Endothelial cell of umbilical vein (primary cell): ENCODE measurements at regions of chr3 and their contacts with region 1.

Region 1: GRCh38 chr3:195226900-195227447 is 44.0 kb downstream of the XXYLT1 start:
- DNase-seq: peak; percentile 46
- H3K4me3 ChIP-seq: no peak overlapping the region
- H3K27ac ChIP-seq: no peak overlapping the region
- H3K4me1 ChIP-seq: peaks cover 28% of the 10 kb centered on the region
- H3K27me3 ChIP-seq: no peaks in the 10 kb centered on the region
- CTCF ChIP-seq: peak; percentile 44 to 63
- POLR2A ChIP-seq: no peak

Region 2: DNA sequence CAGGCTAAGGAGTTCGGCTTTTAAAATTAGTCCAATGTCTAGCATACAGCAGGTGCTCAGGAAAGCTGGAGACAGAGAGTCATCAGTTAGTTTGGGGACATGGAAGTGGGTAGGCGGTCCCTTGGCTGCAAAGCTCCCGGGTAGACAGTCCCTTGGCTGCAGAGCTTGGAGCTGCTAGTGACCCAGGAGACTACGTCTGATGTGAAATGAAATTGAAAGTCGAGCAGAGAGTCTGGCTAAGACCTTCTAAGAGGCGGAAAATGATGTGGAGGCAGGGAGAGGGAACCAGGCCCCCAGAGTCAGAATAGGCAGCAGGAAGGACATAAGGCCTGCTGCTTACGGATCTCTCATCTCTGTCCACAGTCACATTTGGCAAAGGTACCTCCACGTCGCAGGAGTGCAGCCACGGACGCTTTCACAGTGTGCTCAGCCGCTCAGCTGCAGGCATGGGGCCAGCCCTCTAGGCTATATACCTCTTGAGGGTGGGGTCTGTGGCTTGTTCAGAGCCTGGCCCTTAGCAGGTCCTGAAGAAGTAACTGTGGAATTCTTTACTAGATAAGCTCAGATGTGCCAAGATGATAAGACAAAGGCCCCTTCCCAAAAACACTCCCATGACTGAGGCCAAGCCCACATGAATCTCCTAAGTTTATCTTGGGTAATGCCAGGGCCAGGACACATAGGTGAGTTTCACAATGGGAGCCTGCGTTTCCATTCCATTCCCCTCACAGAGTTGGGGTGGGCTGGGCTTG is 87.7 kb before region 1 on chr3:
- CTCF ChIA-PET with region 1: no interaction called
- POLR2A ChIA-PET with region 1: no interaction called
- dilution Hi-C with region 1: no loop called
- intact Hi-C with region 1: no loop called
- DNase-seq: no peak
- H3K4me3 ChIP-seq: no peak overlapping the region
- H3K27ac ChIP-seq: no peak overlapping the region
- H3K4me1 ChIP-seq: peaks cover 27% of the 10 kb centered on the region
- H3K27me3 ChIP-seq: no peaks in the 10 kb centered on the region
- CTCF ChIP-seq: no peak
- POLR2A ChIP-seq: no peak

Region 3: DNA sequence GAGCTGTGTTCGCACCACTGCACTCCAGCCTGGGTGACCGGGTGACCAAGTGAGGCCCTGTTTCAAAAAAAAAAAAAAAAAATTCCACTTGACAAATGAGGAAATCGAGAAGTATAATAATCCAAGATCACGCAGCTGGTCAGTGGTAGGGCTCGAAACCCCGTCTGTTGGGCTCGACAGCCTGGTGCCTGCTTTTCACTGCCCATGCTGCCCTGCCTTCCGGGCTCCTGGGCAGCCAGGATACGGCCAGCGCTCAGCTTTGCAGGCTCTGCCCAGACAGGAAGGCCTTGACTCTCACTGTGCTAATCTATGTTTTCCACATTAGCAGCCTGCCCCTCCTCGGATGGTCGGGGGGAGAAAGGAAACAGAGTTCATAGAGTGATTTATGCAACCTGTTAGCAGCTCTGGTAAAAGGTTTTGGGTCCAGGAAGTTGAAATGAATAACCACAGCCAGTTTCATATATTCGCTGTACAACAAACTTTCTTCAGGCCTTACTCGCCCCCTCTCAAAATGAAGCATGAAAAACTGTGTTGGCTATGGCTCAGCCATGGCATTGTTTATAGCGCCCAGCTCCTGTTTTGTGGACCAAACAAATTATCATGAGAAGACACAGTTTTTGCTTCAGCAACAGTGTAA is 64.8 kb before region 1 on chr3:
- CTCF ChIA-PET with region 1: interaction called, 9 read pairs
- POLR2A ChIA-PET with region 1: interaction called, 3 read pairs
- dilution Hi-C with region 1: no loop called
- intact Hi-C with region 1: loop called (anchors 1 kb)
- DNase-seq: peak; percentile 99
- H3K4me3 ChIP-seq: no peak overlapping the region
- H3K27ac ChIP-seq: peak overlapping the region; percentile 95
- H3K4me1 ChIP-seq: peaks cover 85% of the 10 kb centered on the region
- H3K27me3 ChIP-seq: no peaks in the 10 kb centered on the region
- CTCF ChIP-seq: no peak
- POLR2A ChIP-seq: peak; percentile 89

Region 4: DNA sequence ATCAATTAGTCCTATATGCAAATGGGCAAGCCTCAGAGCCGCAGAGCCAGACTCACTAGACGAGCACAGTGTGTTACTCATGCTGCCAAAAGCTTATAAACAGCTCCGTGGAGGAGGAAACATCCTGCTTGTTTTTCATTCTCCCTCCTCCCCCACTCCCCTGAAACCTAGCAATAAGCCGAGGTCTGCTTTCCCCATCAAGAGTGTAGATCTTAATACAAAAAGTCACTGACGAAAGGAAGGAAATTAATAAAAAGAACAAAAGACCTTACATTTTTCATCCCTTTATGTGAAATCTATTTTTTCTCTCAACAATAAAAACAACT is 44.5 kb before region 1 on chr3:
- CTCF ChIA-PET with region 1: interaction called, 11 read pairs
- POLR2A ChIA-PET with region 1: no interaction called
- dilution Hi-C with region 1: no loop called
- intact Hi-C with region 1: loop called (anchors 1 kb)
- DNase-seq: peak; percentile 96
- H3K4me3 ChIP-seq: no peak overlapping the region
- H3K27ac ChIP-seq: peak overlapping the region; percentile 93
- H3K4me1 ChIP-seq: peaks cover 65% of the 10 kb centered on the region
- H3K27me3 ChIP-seq: no peaks in the 10 kb centered on the region
- CTCF ChIP-seq: no peak
- POLR2A ChIP-seq: no peak

Region 5: DNA sequence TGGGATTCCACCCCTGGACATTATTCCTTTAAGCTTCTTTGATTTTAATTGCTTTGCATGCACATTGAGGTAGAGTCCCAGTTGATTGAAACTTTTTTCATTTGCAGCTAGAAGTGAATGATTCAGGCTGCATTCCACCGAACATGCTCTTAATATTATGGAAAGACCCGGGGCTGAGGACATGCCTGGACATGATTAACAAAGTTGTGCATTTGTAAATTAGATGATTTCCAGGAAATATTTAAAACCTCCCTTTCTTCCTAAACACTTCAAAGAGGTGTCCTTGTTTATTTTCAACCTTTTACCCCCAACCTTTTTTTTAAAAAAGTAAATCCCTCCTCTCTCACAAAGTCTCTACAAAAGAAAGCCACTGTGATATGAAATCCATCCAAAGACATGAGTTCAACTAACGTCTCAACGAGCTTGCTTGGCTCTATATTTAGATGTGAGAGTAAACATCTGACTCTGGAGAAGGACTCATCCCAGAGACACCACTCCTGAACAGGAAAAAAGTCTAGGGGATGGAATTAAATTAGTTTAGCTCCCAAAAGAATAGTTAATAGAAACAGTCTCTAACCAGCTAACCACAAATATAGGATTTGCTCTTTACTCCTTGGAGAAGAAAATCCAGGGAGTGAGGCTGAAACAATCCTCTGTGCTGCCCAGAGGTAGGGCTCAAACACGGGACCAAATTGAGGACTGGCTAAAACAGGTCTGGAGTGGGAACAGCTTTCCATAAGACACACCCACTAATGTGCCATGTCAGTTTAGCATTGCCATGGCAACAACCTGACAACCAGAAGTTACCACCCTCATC is 39.2 kb before region 1 on chr3:
- CTCF ChIA-PET with region 1: interaction called, 11 read pairs
- POLR2A ChIA-PET with region 1: no interaction called
- dilution Hi-C with region 1: no loop called
- intact Hi-C with region 1: no loop called
- DNase-seq: peak; percentile 55
- H3K4me3 ChIP-seq: no peak overlapping the region
- H3K27ac ChIP-seq: peak overlapping the region; percentile 26
- H3K4me1 ChIP-seq: peaks cover 33% of the 10 kb centered on the region
- H3K27me3 ChIP-seq: no peaks in the 10 kb centered on the region
- CTCF ChIP-seq: no peak
- POLR2A ChIP-seq: no peak

Region 6: GRCh38 chr3:195195321-195196209 is 31.4 kb before region 1 on chr3:
- CTCF ChIA-PET with region 1: interaction called, 12 read pairs
- POLR2A ChIA-PET with region 1: no interaction called
- dilution Hi-C with region 1: no loop called
- intact Hi-C with region 1: no loop called
- DNase-seq: peak; percentile 57
- H3K4me3 ChIP-seq: no peak overlapping the region
- H3K27ac ChIP-seq: peak overlapping the region; percentile 79
- H3K4me1 ChIP-seq: peaks cover 45% of the 10 kb centered on the region
- H3K27me3 ChIP-seq: no peaks in the 10 kb centered on the region
- CTCF ChIP-seq: peak in 1 of 2 donors; percentile 30
- POLR2A ChIP-seq: no peak

Region 7: GRCh38 chr3:195204360-195205163 is 22.4 kb before region 1 on chr3:
- CTCF ChIA-PET with region 1: interaction called, 10 read pairs
- POLR2A ChIA-PET with region 1: no interaction called
- dilution Hi-C with region 1: no loop called
- intact Hi-C with region 1: loop called (anchors 2 kb)
- DNase-seq: peak; percentile 90
- H3K4me3 ChIP-seq: peak overlapping the region in 1 of 3 experiments; percentile 4
- H3K27ac ChIP-seq: peak overlapping the region; percentile 67
- H3K4me1 ChIP-seq: peaks cover 26% of the 10 kb centered on the region
- H3K27me3 ChIP-seq: no peaks in the 10 kb centered on the region
- CTCF ChIP-seq: no peak
- POLR2A ChIP-seq: no peak

Region 8: GRCh38 chr3:195210266-195210973 is 16.6 kb before region 1 on chr3:
- CTCF ChIA-PET with region 1: interaction called, 10 read pairs
- POLR2A ChIA-PET with region 1: no interaction called
- dilution Hi-C with region 1: no loop called
- intact Hi-C with region 1: loop called (anchors 1 kb)
- DNase-seq: peak; percentile 89
- H3K4me3 ChIP-seq: no peak overlapping the region
- H3K27ac ChIP-seq: peak overlapping the region; percentile 58
- H3K4me1 ChIP-seq: peaks cover 28% of the 10 kb centered on the region
- H3K27me3 ChIP-seq: no peaks in the 10 kb centered on the region
- CTCF ChIP-seq: no peak
- POLR2A ChIP-seq: no peak